Activated naive CD4-positive, alpha-beta T cell treated with anti-CD3 and anti-CD28 coated beads for 36 hours (primary cell): ENCODE measurements at regions of chr1 and their contacts with region 1.

Region 1: GRCh38 chr1:218351391-218352074 is 6.4 kb downstream of the TGFB2 start:
- DNase-seq: peak; percentile 35
- H3K4me3 Mint-ChIP-seq: peak overlapping the region; percentile 62
- H3K27ac Mint-ChIP-seq: no peak overlapping the region
- H3K4me1 Mint-ChIP-seq: peaks cover 28% of the 10 kb centered on the region
- H3K27me3 Mint-ChIP-seq: peaks cover 60% of the 10 kb centered on the region

Region 2: GRCh38 chr1:218284934-218285635 is 66.4 kb before region 1 on chr1 and contains the start of gene RRP15:
- CTCF ChIA-PET with region 1: no interaction called
- intact Hi-C with region 1: loop called (anchors 1 kb)
- DNase-seq: peak; percentile 92
- H3K4me3 Mint-ChIP-seq: peak within 1 kb of the TSS; percentile 95
- H3K27ac Mint-ChIP-seq: peak within 1 kb of the TSS; percentile 83
- H3K4me1 Mint-ChIP-seq: peaks cover 26% of the 10 kb centered on the region
- H3K27me3 Mint-ChIP-seq: peaks cover 6% of the 10 kb centered on the region
- total RNA-seq, gene RRP15: 12.6 to 13.7 TPM

Region 3: DNA sequence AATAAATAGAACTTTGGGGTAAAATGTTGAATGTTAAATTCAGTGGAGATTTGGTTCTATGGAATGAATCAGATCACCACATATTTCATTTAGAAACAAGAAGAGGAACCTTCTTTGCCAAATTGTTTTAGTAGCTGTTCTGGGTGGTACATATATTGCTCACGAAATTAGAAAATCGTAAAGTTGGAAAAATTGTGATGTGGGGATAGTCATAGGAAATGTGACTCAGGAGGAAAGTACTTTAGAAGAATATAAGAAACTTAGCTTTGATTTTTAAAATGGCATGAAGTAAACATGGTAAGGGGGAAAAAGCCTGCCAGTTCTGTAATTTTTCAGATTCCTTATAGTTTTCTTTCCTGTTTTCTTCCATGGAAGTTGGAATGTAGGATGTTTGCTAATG is 39.0 kb before region 1 on chr1:
- CTCF ChIA-PET with region 1: no interaction called
- intact Hi-C with region 1: no loop called
- DNase-seq: no peak
- H3K4me3 Mint-ChIP-seq: no peak overlapping the region
- H3K27ac Mint-ChIP-seq: no peak overlapping the region
- H3K4me1 Mint-ChIP-seq: peaks cover 8% of the 10 kb centered on the region
- H3K27me3 Mint-ChIP-seq: no peaks in the 10 kb centered on the region

Region 4: DNA sequence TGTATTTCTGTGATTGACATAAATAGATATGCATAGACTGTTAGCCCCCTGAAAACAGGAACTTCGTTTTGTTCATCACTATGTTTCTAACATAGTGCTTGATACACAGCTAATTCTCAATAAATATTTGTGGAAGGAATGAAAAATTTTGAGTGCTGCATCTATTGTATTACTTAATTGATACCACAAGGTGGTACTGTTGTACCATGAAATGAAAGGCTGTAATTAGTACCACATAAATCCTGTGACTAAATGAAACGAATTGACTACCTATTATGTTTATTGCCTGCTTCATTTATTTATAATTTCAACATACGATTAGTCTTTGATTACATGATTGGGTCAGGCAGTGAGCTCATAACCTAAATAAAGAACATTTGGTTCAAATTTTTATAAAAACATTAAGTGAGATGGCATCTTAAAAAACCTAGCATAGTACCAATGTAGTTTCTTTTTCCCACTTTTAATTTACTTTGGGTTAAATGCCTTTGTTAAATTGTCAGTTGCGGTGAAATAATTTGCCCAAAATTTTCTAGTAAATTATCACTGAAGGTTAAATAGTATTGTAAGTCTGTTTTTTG is 21.4 kb before region 1 on chr1:
- CTCF ChIA-PET with region 1: interaction called, 5 read pairs
- intact Hi-C with region 1: loop called (anchors 2 kb)
- DNase-seq: no peak
- H3K4me3 Mint-ChIP-seq: no peak overlapping the region
- H3K27ac Mint-ChIP-seq: no peak overlapping the region
- H3K4me1 Mint-ChIP-seq: no peaks in the 10 kb centered on the region
- H3K27me3 Mint-ChIP-seq: no peaks in the 10 kb centered on the region

Region 5: GRCh38 chr1:219189021-219189824 is 837.7 kb after region 1 on chr1:
- CTCF ChIA-PET with region 1: no interaction called
- intact Hi-C with region 1: loop called (anchors 1 kb)
- DNase-seq: no peak
- H3K4me3 Mint-ChIP-seq: no peak overlapping the region
- H3K27ac Mint-ChIP-seq: peak overlapping the region; percentile 43
- H3K4me1 Mint-ChIP-seq: peaks cover 32% of the 10 kb centered on the region
- H3K27me3 Mint-ChIP-seq: no peaks in the 10 kb centered on the region